Adrenal gland (tissue), 19 donors: ENCODE measurements at regions of chr2 and their contacts with region 1.

Region 1: DNA sequence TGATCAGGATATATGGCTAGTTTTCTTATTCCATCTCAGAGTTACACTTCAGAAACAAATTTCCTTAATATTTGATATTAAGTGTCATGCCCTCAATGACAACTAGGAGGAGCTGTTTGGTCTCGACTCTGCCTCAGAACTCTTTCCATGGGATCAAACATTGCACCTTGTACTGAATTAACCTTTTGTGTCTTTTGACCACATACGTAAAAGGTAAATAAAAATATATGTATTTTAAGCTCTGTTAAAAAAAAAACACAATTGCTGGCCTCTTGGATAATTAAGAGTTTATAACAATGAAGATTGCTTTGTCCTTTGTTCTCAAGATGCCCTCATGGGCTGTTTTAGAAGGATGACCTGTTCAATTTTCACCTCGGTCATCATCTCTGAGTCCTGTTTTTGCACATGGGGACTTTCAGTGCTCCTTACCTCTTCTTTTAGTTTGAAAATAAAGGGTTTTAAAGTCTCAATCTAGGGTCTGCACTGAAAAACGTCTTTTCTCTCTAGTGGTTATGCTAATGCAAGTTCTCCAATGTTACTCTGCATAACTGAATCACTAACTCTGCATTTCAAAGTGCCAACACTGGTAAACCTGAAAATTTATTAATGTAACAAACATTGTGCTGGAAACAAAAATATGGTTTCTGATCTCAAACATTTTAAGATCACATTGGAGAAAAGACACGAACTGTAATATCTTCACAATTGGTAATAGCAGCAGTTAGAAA is 18.8 kb upstream of the FN1 start:
- DNase-seq: peak in 2 of 7 donors; percentile 7 to 8
- H3K4me3 ChIP-seq: no peak overlapping the region
- H3K27ac ChIP-seq: no peak overlapping the region
- H3K4me1 ChIP-seq: no peaks in the 10 kb centered on the region
- H3K27me3 ChIP-seq: no peaks in the 10 kb centered on the region
- CTCF ChIP-seq: peak; percentile 71 to 87 (median 82)
- POLR2A ChIP-seq: no peak

Region 2: GRCh38 chr2:215654148-215654819 is 199.6 kb after region 1 on chr2:
- intact Hi-C with region 1: no loop called
- DNase-seq: no peak
- H3K4me3 ChIP-seq: no peak overlapping the region
- H3K27ac ChIP-seq: no peak overlapping the region
- H3K4me1 ChIP-seq: no peaks in the 10 kb centered on the region
- H3K27me3 ChIP-seq: no peaks in the 10 kb centered on the region
- CTCF ChIP-seq: no peak
- POLR2A ChIP-seq: no peak

Region 3: DNA sequence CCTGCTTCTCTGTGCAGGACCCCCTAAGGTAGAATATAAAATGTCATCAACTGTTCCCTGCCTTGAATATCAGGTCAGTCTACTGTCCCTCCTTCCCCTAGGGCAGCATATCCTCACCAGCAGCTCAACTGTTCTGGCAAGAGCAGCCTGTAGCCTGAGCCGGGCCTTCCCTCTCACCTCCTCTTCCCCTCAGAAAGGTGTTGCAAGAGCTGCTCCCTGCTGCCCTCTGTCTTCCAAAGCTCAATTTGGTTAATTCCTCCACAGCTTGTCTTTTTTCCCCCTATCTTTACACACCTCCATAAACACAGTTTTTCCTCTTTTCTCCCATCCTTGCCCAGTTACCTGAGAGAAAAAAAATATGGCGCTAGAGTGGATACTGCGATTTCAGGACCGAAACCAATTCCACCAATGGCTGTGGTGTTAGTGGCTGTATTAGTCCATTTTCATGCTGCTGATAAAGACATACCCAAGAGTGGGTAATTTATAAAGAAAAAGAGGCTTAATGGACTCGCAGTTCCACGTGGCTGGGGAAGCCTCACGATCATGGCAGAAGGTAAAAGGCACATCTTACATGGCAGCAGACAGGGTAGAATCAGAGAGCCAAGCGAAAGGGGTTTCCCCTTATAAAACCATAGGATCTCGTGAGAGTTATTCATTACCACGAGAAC is 374.0 kb after region 1 on chr2:
- intact Hi-C with region 1: loop called in 1 of 2 experiments (anchors 5 kb)
- DNase-seq: peak; percentile 43 to 78 (median 76)
- H3K4me3 ChIP-seq: no peak overlapping the region
- H3K27ac ChIP-seq: no peak overlapping the region
- H3K4me1 ChIP-seq: peaks cover 13 to 15% of the 10 kb centered on the region in 2 donors
- H3K27me3 ChIP-seq: no peaks in the 10 kb centered on the region
- CTCF ChIP-seq: peak; percentile 62 to 87 (median 73)
- POLR2A ChIP-seq: no peak

Region 4: GRCh38 chr2:215917953-215918620 is 463.4 kb after region 1 on chr2:
- intact Hi-C with region 1: loop called (anchors 5 to 10 kb)
- DNase-seq: no peak
- H3K4me3 ChIP-seq: no peak overlapping the region
- H3K27ac ChIP-seq: no peak overlapping the region
- H3K4me1 ChIP-seq: no peaks in the 10 kb centered on the region
- H3K27me3 ChIP-seq: no peaks in the 10 kb centered on the region
- CTCF ChIP-seq: no peak
- POLR2A ChIP-seq: no peak